ENCODE measurements at regions of chr14 and their contacts with region 1.

Region 1: DNA sequence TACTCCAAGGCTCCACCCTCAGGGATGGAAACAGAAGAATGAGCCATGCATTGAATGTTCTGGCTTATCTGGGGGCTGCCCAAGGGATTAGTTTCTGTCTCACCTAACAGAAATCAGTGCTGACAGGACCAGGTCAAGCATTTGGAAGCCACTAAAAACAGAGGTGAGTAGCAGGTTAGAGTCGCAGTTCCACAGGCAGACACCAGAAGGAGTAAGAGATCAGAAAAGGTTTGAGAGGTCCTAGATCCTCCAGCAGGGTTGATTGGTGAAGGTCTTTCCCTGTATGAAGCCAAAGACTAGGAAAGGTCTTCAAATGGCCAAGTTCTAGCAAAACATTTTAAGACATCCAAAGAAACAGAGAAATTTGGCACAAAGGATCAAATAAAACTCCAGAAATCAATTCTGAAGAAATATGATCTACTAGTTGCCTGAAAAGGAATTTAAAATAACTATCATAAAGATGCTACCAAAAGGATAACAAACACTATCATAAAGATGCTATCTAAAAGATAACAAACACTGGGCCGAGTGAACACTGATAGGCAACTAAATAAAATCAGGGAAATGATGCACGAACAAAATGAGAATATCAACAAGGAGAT is 19.5 kb upstream of the TTC9 start:
- DNase-seq: peak; percentile 68 to 79
- H3K4me3 ChIP-seq: no peak overlapping the region
- H3K4me3 Mint-ChIP-seq: no peak overlapping the region
- H3K27ac Mint-ChIP-seq: no peak overlapping the region
- H3K4me1 ChIP-seq: 0 out of 2 replicates have a peak, but pooled peaks cover 6% of the 10 kb centered on the region
- H3K4me1 Mint-ChIP-seq: peaks cover 6% of the 10 kb centered on the region
- H3K27me3 ChIP-seq: no peaks in the 10 kb centered on the region
- H3K27me3 Mint-ChIP-seq: peaks cover 1% of the 10 kb centered on the region
- CTCF ChIP-seq: peak; percentile 82

Region 2: DNA sequence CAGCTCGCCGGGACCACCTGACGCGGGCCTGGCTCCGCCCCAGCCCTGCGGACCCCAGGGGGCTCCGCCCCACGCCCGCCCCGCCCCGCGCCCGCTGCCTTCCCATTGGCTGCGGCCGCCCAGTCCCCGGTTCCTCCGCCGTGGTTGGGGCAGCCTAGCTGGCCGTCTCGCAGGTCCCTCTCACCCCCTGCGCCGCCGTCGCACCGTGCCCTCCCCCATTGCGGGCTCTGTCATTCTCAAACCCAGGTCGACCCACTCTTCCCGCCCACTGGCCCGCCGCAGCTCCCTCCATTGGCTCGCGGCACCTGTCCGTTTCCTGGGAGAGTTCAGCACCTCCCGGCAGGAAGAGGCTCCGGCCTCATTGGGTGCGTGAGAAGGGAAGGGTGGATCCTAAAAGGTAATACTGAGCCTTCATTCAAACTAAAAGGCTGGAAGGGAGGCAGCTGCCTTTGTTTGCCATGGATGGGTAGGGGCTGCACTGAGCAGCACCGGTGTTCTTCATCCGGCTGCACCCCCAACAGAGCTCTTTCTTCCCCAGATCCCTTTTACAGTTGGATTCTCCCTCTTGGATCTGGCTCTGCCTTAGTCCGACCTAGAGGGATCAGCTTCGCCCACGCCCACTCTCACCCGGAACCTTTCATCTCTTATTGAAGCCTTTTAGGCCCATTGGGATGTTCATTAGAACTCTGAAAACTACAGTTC is 187.5 kb after region 1 on chr14:
- CTCF ChIA-PET with region 1: no interaction called
- POLR2A ChIA-PET with region 1: interaction called, 8 read pairs
- intact Hi-C with region 1: loop called (anchors 2 kb)
- DNase-seq: peak; percentile 99
- H3K4me3 ChIP-seq: peak overlapping the region; percentile 96
- H3K4me3 Mint-ChIP-seq: no peak overlapping the region
- H3K27ac Mint-ChIP-seq: no peak overlapping the region
- H3K4me1 ChIP-seq: peaks cover 27% of the 10 kb centered on the region
- H3K4me1 Mint-ChIP-seq: peaks cover 6% of the 10 kb centered on the region
- H3K27me3 ChIP-seq: no peaks in the 10 kb centered on the region
- H3K27me3 Mint-ChIP-seq: no peaks in the 10 kb centered on the region
- CTCF ChIP-seq: no peak

Region 3: GRCh38 chr14:70972107-70972976 is 350.1 kb after region 1 on chr14:
- CTCF ChIA-PET with region 1: no interaction called
- POLR2A ChIA-PET with region 1: no interaction called
- intact Hi-C with region 1: loop called (anchors 1 kb)
- DNase-seq: peak; percentile 77 to 79
- H3K4me3 ChIP-seq: no peak overlapping the region
- H3K4me3 Mint-ChIP-seq: no peak overlapping the region
- H3K27ac Mint-ChIP-seq: no peak overlapping the region
- H3K4me1 ChIP-seq: no peaks in the 10 kb centered on the region
- H3K4me1 Mint-ChIP-seq: no peaks in the 10 kb centered on the region
- H3K27me3 ChIP-seq: no peaks in the 10 kb centered on the region
- H3K27me3 Mint-ChIP-seq: no peaks in the 10 kb centered on the region
- CTCF ChIP-seq: peak; percentile 71 to 88